ENCODE measurements at regions of chr4 and their contacts with region 1.

Region 1: GRCh38 chr4:156941940-156942548 is 29.6 kb downstream of the PDGFC start:
- DNase-seq: no peak
- H3K4me3 ChIP-seq: no peak overlapping the region
- H3K4me3 Mint-ChIP-seq: no peak overlapping the region
- H3K27ac ChIP-seq: no peak overlapping the region
- H3K27ac Mint-ChIP-seq: peak overlapping the region in 1 of 7 donors; percentile 36
- H3K4me1 ChIP-seq: peaks cover 24 to 38% of the 10 kb centered on the region in 2 donors
- H3K4me1 Mint-ChIP-seq: peaks cover 39% of the 10 kb centered on the region
- H3K27me3 ChIP-seq: no peaks in the 10 kb centered on the region
- H3K27me3 Mint-ChIP-seq: no peaks in the 10 kb centered on the region
- CTCF ChIP-seq: no peak

Region 2: DNA sequence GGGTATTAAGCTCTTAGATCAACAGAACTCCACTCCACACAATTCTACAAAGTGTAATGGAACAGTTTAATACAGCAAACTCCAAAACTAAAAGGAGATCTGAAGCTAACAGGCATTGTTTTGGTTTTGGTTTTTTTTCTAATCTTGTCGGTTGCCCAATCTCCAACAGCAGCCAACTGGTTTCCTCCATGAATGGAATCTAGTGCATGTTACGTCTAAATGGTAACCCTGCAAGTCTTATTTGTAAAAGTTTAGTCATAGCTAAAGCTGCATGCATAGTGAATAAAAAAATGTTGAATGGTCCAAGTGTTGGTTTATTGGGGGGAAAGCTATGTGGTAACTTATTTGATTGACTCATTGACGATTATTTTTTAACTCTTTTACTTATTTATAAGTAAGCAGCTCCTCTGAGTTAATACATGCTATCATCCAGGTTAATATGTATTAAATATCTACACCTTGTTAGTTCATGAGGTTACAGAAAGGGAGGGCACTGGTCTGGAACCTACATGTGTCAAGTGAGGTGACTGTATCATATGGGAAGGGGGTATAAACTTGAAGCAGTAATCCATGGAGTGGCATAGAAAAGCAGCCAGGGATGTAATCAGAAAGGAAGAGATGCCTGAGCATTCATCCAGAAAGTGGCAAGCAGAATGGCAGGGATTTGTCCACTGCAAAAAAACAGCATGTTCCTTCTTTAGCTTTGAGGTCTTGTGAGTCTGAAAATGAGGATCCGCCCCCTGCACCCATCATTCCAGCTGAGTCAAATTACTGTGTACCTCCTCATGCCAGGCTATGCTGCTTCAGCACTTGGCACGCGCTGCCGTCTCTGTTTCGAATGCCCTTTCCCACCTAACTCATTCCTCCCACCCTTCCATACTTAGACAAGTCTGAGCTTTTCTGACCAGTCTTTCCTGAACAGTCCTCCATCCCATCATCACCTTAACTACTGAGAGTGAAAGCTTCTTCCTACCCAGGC is 52.1 kb before region 1 on chr4:
- intact Hi-C with region 1: loop called in 1 of 2 experiments (anchors 10 kb)
- DNase-seq: peak in 2 of 3 donors; percentile 24 to 26
- H3K4me3 ChIP-seq: peak overlapping the region in 1 of 3 experiments; percentile 13
- H3K4me3 Mint-ChIP-seq: peak overlapping the region in 1 of 2 donors; percentile 30
- H3K27ac ChIP-seq: peak overlapping the region in 1 of 2 donors; percentile 43
- H3K27ac Mint-ChIP-seq: peak overlapping the region in 5 of 7 donors; percentile 39 to 79 (median 58)
- H3K4me1 ChIP-seq: peaks cover 20 to 40% of the 10 kb centered on the region in 2 donors
- H3K4me1 Mint-ChIP-seq: peaks cover 39% of the 10 kb centered on the region
- H3K27me3 ChIP-seq: no peaks in the 10 kb centered on the region
- H3K27me3 Mint-ChIP-seq: peaks cover 0 to 2% (median 0%) of the 10 kb centered on the region in 3 donors
- CTCF ChIP-seq: no peak

Measured in CD14-positive monocyte (primary cell).